Colonic mucosa (tissue), 4 donors: ENCODE measurements at regions of chr2 and their contacts with region 1.

Region 1: GRCh38 chr2:202588647-202589581 is 45.9 kb upstream of the FAM117B start:
- DNase-seq: peak; percentile 79
- H3K4me3 ChIP-seq: no peak overlapping the region
- H3K27ac ChIP-seq: no peak overlapping the region
- H3K4me1 ChIP-seq: no peaks in the 10 kb centered on the region
- H3K27me3 ChIP-seq: no peaks in the 10 kb centered on the region
- CTCF ChIP-seq: peak; percentile 93

Region 2: DNA sequence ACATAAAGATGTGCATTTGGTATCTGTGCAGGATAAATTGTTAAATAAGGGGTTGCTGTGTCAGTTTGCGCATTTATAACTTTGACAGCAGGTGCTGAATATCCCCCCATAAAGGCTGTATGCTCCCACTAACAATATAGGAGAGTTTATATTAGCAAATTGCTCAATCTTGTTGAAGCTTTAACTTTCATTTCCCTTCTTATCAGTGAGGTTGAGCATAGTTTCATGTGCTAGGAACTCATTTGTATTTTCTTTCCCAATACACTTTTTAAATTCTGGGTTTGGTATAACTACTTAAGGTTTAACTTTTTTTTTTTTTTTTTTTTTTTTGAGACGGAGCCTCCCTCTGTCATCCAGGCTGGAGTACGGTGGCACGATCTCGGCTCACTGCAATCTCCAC is 134.8 kb after region 1 on chr2:
- intact Hi-C with region 1: no loop called
- DNase-seq: no peak
- H3K4me3 ChIP-seq: no peak overlapping the region
- H3K27ac ChIP-seq: no peak overlapping the region
- H3K4me1 ChIP-seq: no peaks in the 10 kb centered on the region
- H3K27me3 ChIP-seq: no peaks in the 10 kb centered on the region
- CTCF ChIP-seq: no peak

Region 3: DNA sequence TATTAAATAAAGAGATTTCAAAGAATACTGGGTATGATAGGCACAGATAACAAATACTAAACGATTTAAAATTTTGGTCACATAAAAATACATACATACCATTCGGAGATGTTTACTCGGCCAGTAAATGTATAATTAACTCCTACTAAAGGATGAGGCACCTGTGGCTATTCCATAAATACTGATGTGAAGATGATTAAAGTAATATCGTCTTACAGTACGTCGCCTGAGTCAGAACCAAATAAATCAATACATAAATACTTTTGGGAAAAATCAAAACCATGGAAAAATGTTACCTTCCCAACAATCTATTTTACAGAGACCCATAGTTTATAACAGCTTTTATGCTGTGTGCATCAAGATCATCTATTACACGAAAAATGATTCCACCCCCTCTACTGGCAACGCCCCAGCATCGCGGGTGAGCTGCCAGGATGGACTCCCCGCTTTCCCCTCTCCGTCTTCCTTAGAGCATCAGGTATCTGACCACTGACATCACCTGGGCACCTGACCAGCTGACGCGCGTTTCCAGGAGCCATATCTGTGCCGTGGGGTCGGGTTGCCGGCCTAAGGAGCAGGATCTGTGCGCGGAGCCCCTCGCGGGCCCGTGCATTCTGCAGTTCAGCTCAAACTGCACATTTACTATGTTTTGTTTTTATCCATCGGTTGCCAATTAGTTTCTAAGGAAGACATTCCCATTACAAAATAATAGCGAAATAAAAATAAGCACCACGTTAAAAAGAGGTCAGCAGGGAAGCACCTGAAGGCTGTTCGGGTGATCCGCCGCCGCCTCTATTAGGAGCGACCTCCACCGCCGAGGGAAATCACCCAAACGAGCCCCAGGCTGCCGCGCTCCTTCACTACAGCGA is 281.8 kb after region 1 on chr2:
- intact Hi-C with region 1: loop called (anchors 10 kb)
- DNase-seq: peak; percentile 65
- H3K4me3 ChIP-seq: peak overlapping the region; percentile 71
- H3K27ac ChIP-seq: peak overlapping the region; percentile 4
- H3K4me1 ChIP-seq: no peaks in the 10 kb centered on the region
- H3K27me3 ChIP-seq: no peaks in the 10 kb centered on the region
- CTCF ChIP-seq: peak; percentile 34